T-cell (primary cell): ENCODE measurements at regions of chr5 and their contacts with region 1.

Region 1: GRCh38 chr5:65760504-65761275 is 38.7 kb downstream of the NLN start:
- DNase-seq: peak; percentile 29 to 82 (median 61)
- ATAC-seq: peak; percentile 95 to 100 (median 100)
- H3K4me3 ChIP-seq: no peak overlapping the region
- H3K4me3 Mint-ChIP-seq: no peak overlapping the region
- H3K27ac ChIP-seq: no peak overlapping the region
- H3K27ac Mint-ChIP-seq: no peak overlapping the region
- H3K4me1 ChIP-seq: peaks cover 0 to 9% of the 10 kb centered on the region in 2 experiments
- H3K4me1 Mint-ChIP-seq: peaks cover 3 to 6% (median 5%) of the 10 kb centered on the region in 3 donors
- H3K27me3 ChIP-seq: no peaks in the 10 kb centered on the region
- H3K27me3 Mint-ChIP-seq: no peaks in the 10 kb centered on the region

Region 2: GRCh38 chr5:64273276-64273675 is 1487.4 kb before region 1 on chr5:
- CTCF ChIA-PET with region 1: no interaction called
- POLR2A ChIA-PET with region 1: no interaction called
- DNase-seq: no peak
- ATAC-seq: no peak
- H3K4me3 ChIP-seq: no peak overlapping the region
- H3K4me3 Mint-ChIP-seq: no peak overlapping the region
- H3K27ac ChIP-seq: no peak overlapping the region
- H3K27ac Mint-ChIP-seq: no peak overlapping the region
- H3K4me1 ChIP-seq: no peaks in the 10 kb centered on the region
- H3K4me1 Mint-ChIP-seq: no peaks in the 10 kb centered on the region
- H3K27me3 ChIP-seq: no peaks in the 10 kb centered on the region
- H3K27me3 Mint-ChIP-seq: no peaks in the 10 kb centered on the region

Region 3: GRCh38 chr5:65986050-65986451 is 225.4 kb after region 1 on chr5:
- CTCF ChIA-PET with region 1: no interaction called
- POLR2A ChIA-PET with region 1: no interaction called
- DNase-seq: no peak
- ATAC-seq: no peak
- H3K4me3 ChIP-seq: no peak overlapping the region
- H3K4me3 Mint-ChIP-seq: no peak overlapping the region
- H3K27ac ChIP-seq: no peak overlapping the region
- H3K27ac Mint-ChIP-seq: peak overlapping the region in 1 of 2 donors; percentile 63
- H3K4me1 ChIP-seq: peaks cover 2 to 12% of the 10 kb centered on the region in 2 experiments
- H3K4me1 Mint-ChIP-seq: peaks cover 68 to 73% (median 69%) of the 10 kb centered on the region in 3 donors
- H3K27me3 ChIP-seq: no peaks in the 10 kb centered on the region
- H3K27me3 Mint-ChIP-seq: no peaks in the 10 kb centered on the region

Region 4: GRCh38 chr5:66171349-66172344 is 411.0 kb after region 1 on chr5:
- CTCF ChIA-PET with region 1: interaction called in 1 of 2 experiments, 10 read pairs
- POLR2A ChIA-PET with region 1: interaction called in 1 of 2 experiments, 5 read pairs
- DNase-seq: peak; percentile 1 to 84 (median 56)
- ATAC-seq: peak; percentile 84 to 91 (median 87)
- H3K4me3 ChIP-seq: no peak overlapping the region
- H3K4me3 Mint-ChIP-seq: no peak overlapping the region
- H3K27ac ChIP-seq: peak overlapping the region; percentile 44
- H3K27ac Mint-ChIP-seq: peak overlapping the region in 1 of 2 donors; percentile 75
- H3K4me1 ChIP-seq: peaks cover 0 to 25% of the 10 kb centered on the region in 2 experiments
- H3K4me1 Mint-ChIP-seq: peaks cover 26 to 36% (median 28%) of the 10 kb centered on the region in 3 donors
- H3K27me3 ChIP-seq: no peaks in the 10 kb centered on the region
- H3K27me3 Mint-ChIP-seq: no peaks in the 10 kb centered on the region